SK-N-SH (cell line): ENCODE measurements at regions of chr20 and their contacts with region 1.

Region 1: DNA sequence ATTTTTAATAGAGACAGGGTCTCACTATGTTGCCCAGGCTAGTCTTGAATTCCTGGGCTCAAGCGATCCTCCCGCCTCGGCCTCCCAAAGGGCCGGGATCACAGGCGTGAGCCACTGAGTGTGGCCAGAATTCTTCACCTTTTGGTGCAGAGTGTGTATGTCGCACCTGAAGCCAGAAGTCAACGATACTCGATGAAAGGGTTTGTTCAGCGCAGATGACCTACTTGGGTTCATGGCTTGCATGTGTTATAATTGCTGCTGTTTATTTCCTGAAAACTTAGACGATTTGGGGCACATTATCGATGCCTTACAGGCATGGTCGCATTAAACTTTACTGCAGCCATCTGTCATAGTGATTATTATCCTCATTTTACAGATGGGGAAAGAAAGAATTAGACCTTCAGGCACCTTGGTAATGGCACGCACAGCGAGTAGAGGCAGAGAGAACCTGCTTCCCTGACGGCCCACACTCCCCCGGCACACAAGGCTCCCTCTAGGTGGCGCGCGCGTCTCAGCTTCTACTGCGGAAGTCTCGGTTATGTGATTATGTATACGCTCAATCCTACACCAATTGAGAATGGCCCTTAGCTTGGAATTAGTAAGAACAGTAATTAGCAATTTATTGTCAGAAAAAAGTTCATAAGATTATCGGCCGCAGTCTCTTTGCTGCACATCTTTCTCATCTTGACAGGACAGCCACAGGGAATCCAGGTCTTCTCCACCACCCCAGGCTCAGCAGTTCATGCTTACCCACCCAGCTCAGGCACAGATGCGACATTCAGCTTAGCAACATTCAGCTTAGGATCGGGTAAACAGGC is 212.8 kb upstream of the PROKR2 start:
- DNase-seq: peak; percentile 73
- H3K4me3 ChIP-seq: peak overlapping the region; percentile 28 to 36
- H3K27ac ChIP-seq: no peak overlapping the region; a peak in 1 of 4 replicates
- H3K4me1 ChIP-seq: peaks cover 0 to 2% of the 10 kb centered on the region in 2 experiments; a peak in 1 of 4 replicates
- H3K27me3 ChIP-seq: no peaks in the 10 kb centered on the region
- CTCF ChIP-seq: peak; percentile 94
- EP300 ChIP-seq: no peak; a peak in 1 of 4 replicates
- RAD21 ChIP-seq: peak; percentile 84

Region 2: GRCh38 chr20:5495939-5496338 is 33.6 kb before region 1 on chr20:
- CTCF ChIA-PET with region 1: interaction called, 12 read pairs
- POLR2A ChIA-PET with region 1: no interaction called
- DNase-seq: no peak
- H3K4me3 ChIP-seq: no peak overlapping the region
- H3K27ac ChIP-seq: no peak overlapping the region
- H3K4me1 ChIP-seq: peaks cover 0 to 10% of the 10 kb centered on the region in 2 experiments; a peak in 1 of 4 replicates
- H3K27me3 ChIP-seq: no peaks in the 10 kb centered on the region
- CTCF ChIP-seq: no peak
- EP300 ChIP-seq: no peak
- RAD21 ChIP-seq: no peak

Region 3: DNA sequence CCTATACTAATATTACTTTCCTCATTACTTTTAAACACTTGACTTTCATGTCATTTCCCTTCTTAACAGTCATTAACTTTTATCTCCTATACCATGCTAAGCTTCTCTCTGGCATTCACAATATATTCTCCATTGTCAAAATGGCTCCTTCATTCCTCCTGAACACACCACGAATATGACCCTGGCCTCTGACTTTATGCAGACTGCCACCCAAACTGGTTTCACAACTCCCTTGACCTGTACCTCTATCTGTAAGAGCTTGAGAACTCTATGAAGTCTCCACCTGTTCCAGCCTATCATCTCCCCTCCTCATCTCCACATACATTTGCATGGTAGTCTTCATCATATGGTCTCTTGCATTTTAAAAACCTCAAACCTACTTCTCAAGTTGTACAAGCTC is 13.8 kb after region 1 on chr20:
- CTCF ChIA-PET with region 1: interaction called, 32 read pairs
- POLR2A ChIA-PET with region 1: no interaction called
- DNase-seq: no peak
- H3K4me3 ChIP-seq: no peak overlapping the region
- H3K27ac ChIP-seq: no peak overlapping the region
- H3K4me1 ChIP-seq: no peaks in the 10 kb centered on the region; a peak in 2 of 4 replicates
- H3K27me3 ChIP-seq: no peaks in the 10 kb centered on the region
- CTCF ChIP-seq: no peak
- EP300 ChIP-seq: no peak
- RAD21 ChIP-seq: no peak

Region 4: GRCh38 chr20:5557123-5557522 is 27.6 kb after region 1 on chr20:
- CTCF ChIA-PET with region 1: interaction called, 35 read pairs
- POLR2A ChIA-PET with region 1: no interaction called
- DNase-seq: peak; percentile 54
- H3K4me3 ChIP-seq: no peak overlapping the region; a peak in 1 of 4 replicates
- H3K27ac ChIP-seq: no peak overlapping the region
- H3K4me1 ChIP-seq: no peaks in the 10 kb centered on the region
- H3K27me3 ChIP-seq: no peaks in the 10 kb centered on the region
- CTCF ChIP-seq: peak; percentile 72
- EP300 ChIP-seq: no peak
- RAD21 ChIP-seq: peak; percentile 74

Region 5: GRCh38 chr20:5788385-5788895 is 258.9 kb after region 1 on chr20:
- CTCF ChIA-PET with region 1: interaction called, 61 read pairs
- POLR2A ChIA-PET with region 1: no interaction called
- DNase-seq: peak; percentile 79
- H3K4me3 ChIP-seq: no peak overlapping the region; a peak in 1 of 4 replicates
- H3K27ac ChIP-seq: no peak overlapping the region
- H3K4me1 ChIP-seq: peaks cover 7 to 14% of the 10 kb centered on the region in 2 experiments; a peak in 3 of 4 replicates
- H3K27me3 ChIP-seq: no peaks in the 10 kb centered on the region
- CTCF ChIP-seq: peak; percentile 96
- EP300 ChIP-seq: 0 out of 4 replicates have a peak, but pooled peaks of 1 of the 2 experiments have one; percentile 23
- RAD21 ChIP-seq: peak; percentile 96

Region 6: GRCh38 chr20:6074145-6074561 is 544.6 kb after region 1 on chr20:
- CTCF ChIA-PET with region 1: interaction called, 84 read pairs
- POLR2A ChIA-PET with region 1: no interaction called
- DNase-seq: peak; percentile 54
- H3K4me3 ChIP-seq: no peak overlapping the region
- H3K27ac ChIP-seq: no peak overlapping the region
- H3K4me1 ChIP-seq: peaks cover 0 to 5% of the 10 kb centered on the region in 2 experiments; a peak in 1 of 4 replicates
- H3K27me3 ChIP-seq: no peaks in the 10 kb centered on the region
- CTCF ChIP-seq: peak; percentile 42
- EP300 ChIP-seq: no peak
- RAD21 ChIP-seq: peak; percentile 58